Calu3 (cell line): ENCODE measurements at regions of chrX and their contacts with region 1.

Region 1: GRCh38 chrX:47233337-47234113 is 716 bp downstream of the USP11 start:
- DNase-seq: peak; percentile 97
- H3K4me3 Mint-ChIP-seq: peak overlapping the region; percentile 89
- H3K27ac Mint-ChIP-seq: peak overlapping the region; percentile 98
- H3K4me1 Mint-ChIP-seq: peaks cover 18% of the 10 kb centered on the region
- H3K27me3 Mint-ChIP-seq: no peaks in the 10 kb centered on the region
- CTCF ChIP-seq: no peak

Region 2: GRCh38 chrX:47297871-47298270 is 64.3 kb after region 1 on chrX:
- CTCF ChIA-PET with region 1: interaction called, 5 read pairs
- intact Hi-C with region 1: loop called (anchors 5 kb)
- DNase-seq: peak; percentile 81
- H3K4me3 Mint-ChIP-seq: no peak overlapping the region
- H3K27ac Mint-ChIP-seq: peak overlapping the region; percentile 91
- H3K4me1 Mint-ChIP-seq: peaks cover 15% of the 10 kb centered on the region
- H3K27me3 Mint-ChIP-seq: no peaks in the 10 kb centered on the region
- CTCF ChIP-seq: no peak